ENCODE measurements at regions of chr3 and their contacts with region 1.

Region 1: DNA sequence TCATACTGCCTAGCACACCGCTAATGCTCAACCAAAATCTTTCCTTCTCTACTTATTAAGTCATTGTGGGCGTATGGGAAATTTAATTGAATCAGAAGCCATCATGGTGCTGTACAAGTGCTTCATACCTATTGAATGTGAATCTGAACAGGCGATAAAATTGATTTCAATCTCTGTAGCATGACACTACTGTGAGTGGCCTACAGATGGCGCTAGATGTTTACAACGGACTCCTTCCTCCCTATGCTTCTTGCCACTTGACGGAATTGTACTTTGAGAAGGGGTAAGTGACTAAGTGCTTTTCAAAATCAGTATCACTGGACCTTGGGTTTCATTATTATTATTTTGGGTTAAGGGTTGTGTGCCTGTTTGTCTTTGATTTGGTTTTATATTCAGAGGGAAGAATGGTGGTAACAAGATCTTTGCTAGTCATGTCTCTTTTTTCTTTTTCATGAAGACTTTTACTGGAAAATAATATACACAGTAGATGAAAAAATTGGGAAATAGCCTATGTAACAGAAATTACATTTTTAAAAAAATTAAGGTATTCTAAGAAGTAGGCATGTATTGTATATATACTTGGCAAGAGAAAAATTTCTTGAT is 35.4 kb downstream of the ACP3 start:
- DNase-seq: peak; percentile 61
- ATAC-seq: peak; percentile 72

Region 2: GRCh38 chr3:132399054-132399929 is 46.6 kb after region 1 on chr3:
- intact Hi-C with region 1: loop called (anchors 2 to 10 kb)
- DNase-seq: no peak
- ATAC-seq: peak in 1 of 2 donors; percentile 58

Region 3: GRCh38 chr3:132405188-132405587 is 52.5 kb after region 1 on chr3:
- intact Hi-C with region 1: loop called in 1 of 2 experiments (anchors 10 kb)
- DNase-seq: no peak
- ATAC-seq: peak; percentile 30 to 66

Region 4: DNA sequence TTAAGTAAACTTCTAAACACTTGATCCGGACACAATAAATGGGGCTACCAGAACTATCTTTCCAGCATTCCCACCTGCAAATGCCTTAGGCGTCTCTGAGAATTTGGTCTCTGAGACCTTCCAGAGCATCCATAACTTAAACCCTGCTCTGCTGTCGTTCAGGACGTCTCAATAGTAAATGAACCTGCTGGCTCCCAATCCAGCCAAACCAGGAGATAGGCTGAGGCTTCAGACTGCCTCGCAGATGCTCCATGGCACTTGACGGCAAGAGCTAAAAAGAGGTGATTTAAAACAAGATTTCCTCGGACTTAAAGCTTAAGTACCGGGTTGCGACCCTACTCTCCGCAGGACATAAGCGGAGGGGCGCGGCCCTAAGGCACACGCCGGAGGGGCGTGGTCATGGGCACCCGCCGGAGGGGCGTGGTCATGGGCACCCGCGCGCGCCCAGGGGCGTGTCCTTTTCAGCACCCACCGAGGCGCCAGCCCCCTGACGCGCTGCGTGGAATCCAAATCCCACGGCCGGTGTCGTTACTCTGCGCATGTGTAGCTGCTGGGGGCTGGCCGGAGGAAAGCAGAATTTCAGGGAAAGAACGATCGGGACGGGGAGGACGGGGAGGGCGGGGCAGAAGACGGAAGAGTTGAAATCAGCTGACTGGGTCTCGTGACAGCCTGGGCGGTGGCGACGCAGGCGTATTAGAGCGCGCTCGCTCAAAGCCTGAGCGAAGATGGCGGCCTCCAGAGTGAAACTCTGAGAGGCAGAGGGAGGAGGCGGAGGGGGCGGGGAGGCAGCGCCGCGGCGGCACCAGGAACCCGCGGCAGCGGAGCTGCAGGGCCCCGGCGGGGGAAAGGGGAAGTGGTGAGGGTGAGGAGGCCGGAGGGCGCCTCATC is 64.4 kb after region 1 on chr3 and contains the start of gene DNAJC13:
- intact Hi-C with region 1: no loop called
- DNase-seq: peak; percentile 95
- ATAC-seq: peak; percentile 97 to 98
- total RNA-seq, gene DNAJC13: 26.4 to 30.7 TPM

Region 5: DNA sequence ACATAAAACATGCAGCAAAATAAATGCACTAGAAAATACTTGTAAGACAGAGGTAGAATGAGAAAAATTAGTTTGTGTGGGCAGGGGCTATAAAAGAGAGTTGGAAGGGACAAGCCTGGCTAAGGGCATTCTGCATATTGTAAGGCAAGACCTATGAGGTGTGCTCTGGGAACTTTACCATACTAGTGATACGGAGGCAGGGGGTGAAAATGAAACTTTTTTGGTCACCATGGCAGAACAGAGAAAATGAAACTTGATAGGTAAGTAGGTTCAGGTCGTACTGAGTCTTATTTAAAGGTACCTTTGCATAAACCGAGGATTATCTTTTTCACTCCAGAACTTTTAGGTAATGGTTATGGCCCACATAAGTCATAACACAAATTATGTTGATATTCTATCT is 169.7 kb after region 1 on chr3:
- intact Hi-C with region 1: no loop called
- DNase-seq: no peak
- ATAC-seq: no peak